ENCODE measurements at regions of chr3 and their contacts with region 1.

Region 1: GRCh38 chr3:39180546-39181346 is 11.6 kb downstream of the XIRP1 start:
- DNase-seq: peak; percentile 95
- ATAC-seq: peak; percentile 87

Region 2: GRCh38 chr3:39107388-39108199 is 73.2 kb before region 1 on chr3 and contains the starts of genes GORASP1 and TTC21A:
- intact Hi-C with region 1: loop called (anchors 2 kb)
- DNase-seq: peak; percentile 95
- ATAC-seq: peak; percentile 91
- total RNA-seq, gene GORASP1: 45.6 TPM
- total RNA-seq, gene TTC21A: 1.2 TPM

Region 3: GRCh38 chr3:39138804-39139415 is 41.8 kb before region 1 on chr3:
- intact Hi-C with region 1: loop called (anchors 5 kb)
- DNase-seq: peak; percentile 82
- ATAC-seq: peak; percentile 55

Region 4: GRCh38 chr3:39150799-39151631 is 29.7 kb before region 1 on chr3:
- intact Hi-C with region 1: loop called (anchors 1 kb)
- DNase-seq: peak; percentile 91
- ATAC-seq: peak; percentile 47

Region 5: DNA sequence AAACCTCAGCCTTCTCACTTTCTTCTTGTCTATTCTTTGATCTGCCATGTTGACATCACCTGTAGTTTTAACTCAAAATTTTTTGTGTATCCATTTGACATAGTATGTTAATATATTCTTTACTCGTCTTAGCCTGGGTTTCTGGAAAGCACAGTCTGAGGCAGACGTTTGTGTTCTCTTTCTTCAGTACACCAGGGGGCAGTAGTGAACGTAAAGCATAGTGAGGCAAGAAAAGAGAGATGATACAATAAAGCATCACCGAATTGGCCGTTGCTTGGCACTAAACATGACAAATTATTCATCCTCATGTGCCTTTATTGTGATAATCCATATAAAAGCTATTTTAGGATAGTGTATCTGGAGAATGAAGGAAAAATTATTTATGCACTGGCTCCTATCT is 487.7 kb after region 1 on chr3:
- intact Hi-C with region 1: no loop called
- DNase-seq: no peak
- ATAC-seq: no peak